CD8-positive, alpha-beta T cell (primary cell): ENCODE measurements at regions of chr1 and their contacts with region 1.

Region 1: DNA sequence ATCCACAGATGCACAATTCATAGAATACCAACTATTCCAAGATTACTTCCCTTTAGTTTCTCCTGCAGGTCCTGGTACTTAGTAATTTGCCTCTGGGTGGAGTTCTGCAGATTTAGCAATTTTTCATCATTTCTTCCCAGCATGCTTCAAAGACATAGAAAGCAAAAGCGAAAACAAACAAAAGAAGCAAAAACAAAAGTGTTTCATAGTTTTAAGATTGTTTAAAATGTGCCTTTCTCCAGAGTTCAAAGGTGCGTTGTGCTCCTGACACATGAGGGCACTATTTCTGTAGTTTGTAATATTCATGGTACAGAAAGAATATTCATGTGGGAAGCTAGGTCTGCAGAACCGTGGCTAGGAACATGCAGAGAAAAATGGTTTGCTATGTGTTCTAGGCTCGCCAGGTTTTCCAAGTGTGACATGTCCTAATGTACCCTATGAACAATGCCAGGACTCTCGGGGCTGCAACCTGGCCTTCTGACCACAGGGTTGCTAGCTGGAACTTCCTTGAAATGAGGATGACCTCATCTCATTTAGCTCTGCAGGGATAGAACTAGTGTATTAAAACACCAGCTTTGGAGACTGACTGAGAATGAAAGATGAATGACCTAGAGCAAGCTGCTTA is 30.0 kb upstream of the RCSD1 start:
- DNase-seq: peak in 6 of 9 experiments; percentile 32 to 81 (median 58)
- ATAC-seq: peak; percentile 88
- H3K4me3 ChIP-seq: no peak overlapping the region
- H3K4me3 Mint-ChIP-seq: peak overlapping the region; percentile 38
- H3K27ac ChIP-seq: no peak overlapping the region
- H3K27ac Mint-ChIP-seq: no peak overlapping the region
- H3K4me1 ChIP-seq: peaks cover 38% of the 10 kb centered on the region
- H3K4me1 Mint-ChIP-seq: peaks cover 42% of the 10 kb centered on the region
- H3K27me3 ChIP-seq: no peaks in the 10 kb centered on the region
- H3K27me3 Mint-ChIP-seq: no peaks in the 10 kb centered on the region
- CTCF ChIP-seq: peak; percentile 71

Region 2: GRCh38 chr1:167617153-167618147 is 17.4 kb after region 1 on chr1:
- CTCF ChIA-PET with region 1: interaction called, 31 read pairs
- POLR2A ChIA-PET with region 1: no interaction called
- intact Hi-C with region 1: loop called in 1 of 2 experiments (anchors 2 kb)
- DNase-seq: peak in 4 of 9 experiments; percentile 31 to 68 (median 46)
- ATAC-seq: peak; percentile 49
- H3K4me3 ChIP-seq: peak overlapping the region in 1 of 2 experiments; percentile 6
- H3K4me3 Mint-ChIP-seq: peak overlapping the region; percentile 60
- H3K27ac ChIP-seq: peak overlapping the region; percentile 9 to 59
- H3K27ac Mint-ChIP-seq: peak overlapping the region; percentile 92
- H3K4me1 ChIP-seq: peaks cover 39% of the 10 kb centered on the region
- H3K4me1 Mint-ChIP-seq: peaks cover 59% of the 10 kb centered on the region
- H3K27me3 ChIP-seq: no peaks in the 10 kb centered on the region
- H3K27me3 Mint-ChIP-seq: no peaks in the 10 kb centered on the region
- CTCF ChIP-seq: no peak

Region 3: DNA sequence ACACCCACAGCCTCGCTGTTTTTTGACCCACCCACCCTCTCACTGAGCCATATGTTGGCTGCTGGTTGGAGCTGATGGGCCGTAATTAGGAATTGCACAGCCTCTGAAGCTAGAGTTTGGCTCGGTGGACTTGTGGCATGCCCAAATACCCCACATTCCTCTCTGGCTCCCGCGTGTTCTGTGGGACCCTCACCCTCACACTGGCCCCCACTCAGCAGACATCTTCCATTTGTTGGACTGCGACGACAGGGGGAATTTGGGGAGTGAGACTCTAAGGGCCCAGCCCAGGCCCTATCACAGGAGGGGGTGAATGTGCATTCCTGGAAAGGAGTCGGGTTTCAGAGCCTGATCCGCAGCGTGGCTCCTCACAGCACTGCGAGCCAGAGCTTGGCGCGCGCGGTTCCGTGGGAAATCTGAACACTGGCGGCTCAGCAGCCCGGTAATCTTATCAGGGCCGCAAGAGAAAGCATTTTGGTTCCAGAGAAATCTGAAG is 35.1 kb after region 1 on chr1:
- CTCF ChIA-PET with region 1: interaction called, 154 read pairs
- POLR2A ChIA-PET with region 1: interaction called, 68 read pairs
- intact Hi-C with region 1: loop called (anchors 1 kb)
- DNase-seq: peak in 1 of 9 experiments; percentile 46
- ATAC-seq: no peak
- H3K4me3 ChIP-seq: no peak overlapping the region
- H3K4me3 Mint-ChIP-seq: peak overlapping the region; percentile 8
- H3K27ac ChIP-seq: peak overlapping the region in 1 of 2 experiments; percentile 5
- H3K27ac Mint-ChIP-seq: peak overlapping the region; percentile 97
- H3K4me1 ChIP-seq: peaks cover 76% of the 10 kb centered on the region
- H3K4me1 Mint-ChIP-seq: peaks cover 88% of the 10 kb centered on the region
- H3K27me3 ChIP-seq: no peaks in the 10 kb centered on the region
- H3K27me3 Mint-ChIP-seq: no peaks in the 10 kb centered on the region
- CTCF ChIP-seq: no peak

Region 4: GRCh38 chr1:167650269-167651160 is 50.4 kb after region 1 on chr1:
- CTCF ChIA-PET with region 1: interaction called, 11 read pairs
- POLR2A ChIA-PET with region 1: no interaction called
- intact Hi-C with region 1: no loop called
- DNase-seq: peak in 1 of 9 experiments; percentile 38
- ATAC-seq: no peak
- H3K4me3 ChIP-seq: peak overlapping the region in 1 of 2 experiments; percentile 18
- H3K4me3 Mint-ChIP-seq: peak overlapping the region; percentile 72
- H3K27ac ChIP-seq: peak overlapping the region in 1 of 2 experiments; percentile 76
- H3K27ac Mint-ChIP-seq: peak overlapping the region; percentile 91
- H3K4me1 ChIP-seq: peaks cover 81% of the 10 kb centered on the region
- H3K4me1 Mint-ChIP-seq: peaks cover 90% of the 10 kb centered on the region
- H3K27me3 ChIP-seq: no peaks in the 10 kb centered on the region
- H3K27me3 Mint-ChIP-seq: no peaks in the 10 kb centered on the region
- CTCF ChIP-seq: no peak

Region 5: DNA sequence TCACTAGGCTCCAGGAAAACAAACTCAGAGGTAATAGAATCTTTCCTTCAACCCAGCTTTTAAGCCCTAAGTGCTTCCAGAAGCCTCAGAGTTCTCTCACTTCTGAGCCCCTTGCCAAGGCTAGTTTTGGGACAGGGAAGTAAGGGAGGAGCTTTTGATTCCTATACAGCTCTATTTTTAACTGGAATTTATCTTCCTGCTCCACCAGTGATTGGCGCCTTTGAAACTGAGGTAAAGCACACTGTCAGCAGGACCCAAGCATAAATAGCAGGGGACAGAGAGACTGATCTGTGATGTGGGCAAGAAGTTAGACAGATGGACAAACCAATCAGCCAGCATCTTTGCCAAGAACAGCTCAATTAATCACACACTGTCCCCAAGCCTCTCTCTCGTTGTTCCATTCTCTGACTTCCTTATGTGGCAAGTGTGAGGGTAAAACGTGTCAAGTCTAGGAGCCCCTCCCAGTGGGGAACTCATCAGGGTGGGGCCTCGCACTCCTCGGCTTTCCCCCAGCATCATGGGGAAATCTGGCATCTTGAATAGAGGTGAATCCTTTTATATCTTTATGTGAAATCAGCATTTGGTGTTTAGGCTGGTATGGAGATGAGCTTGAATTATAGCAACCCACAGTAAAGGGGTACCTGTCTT is 81.5 kb after region 1 on chr1:
- CTCF ChIA-PET with region 1: interaction called, 186 read pairs
- POLR2A ChIA-PET with region 1: interaction called, 22 read pairs
- intact Hi-C with region 1: no loop called
- DNase-seq: peak in 2 of 9 experiments; percentile 20 to 25
- ATAC-seq: no peak
- H3K4me3 ChIP-seq: no peak overlapping the region
- H3K4me3 Mint-ChIP-seq: no peak overlapping the region
- H3K27ac ChIP-seq: peak overlapping the region; percentile 19 to 48
- H3K27ac Mint-ChIP-seq: no peak overlapping the region
- H3K4me1 ChIP-seq: peaks cover 32% of the 10 kb centered on the region
- H3K4me1 Mint-ChIP-seq: peaks cover 23% of the 10 kb centered on the region
- H3K27me3 ChIP-seq: no peaks in the 10 kb centered on the region
- H3K27me3 Mint-ChIP-seq: no peaks in the 10 kb centered on the region
- CTCF ChIP-seq: no peak

Region 6: DNA sequence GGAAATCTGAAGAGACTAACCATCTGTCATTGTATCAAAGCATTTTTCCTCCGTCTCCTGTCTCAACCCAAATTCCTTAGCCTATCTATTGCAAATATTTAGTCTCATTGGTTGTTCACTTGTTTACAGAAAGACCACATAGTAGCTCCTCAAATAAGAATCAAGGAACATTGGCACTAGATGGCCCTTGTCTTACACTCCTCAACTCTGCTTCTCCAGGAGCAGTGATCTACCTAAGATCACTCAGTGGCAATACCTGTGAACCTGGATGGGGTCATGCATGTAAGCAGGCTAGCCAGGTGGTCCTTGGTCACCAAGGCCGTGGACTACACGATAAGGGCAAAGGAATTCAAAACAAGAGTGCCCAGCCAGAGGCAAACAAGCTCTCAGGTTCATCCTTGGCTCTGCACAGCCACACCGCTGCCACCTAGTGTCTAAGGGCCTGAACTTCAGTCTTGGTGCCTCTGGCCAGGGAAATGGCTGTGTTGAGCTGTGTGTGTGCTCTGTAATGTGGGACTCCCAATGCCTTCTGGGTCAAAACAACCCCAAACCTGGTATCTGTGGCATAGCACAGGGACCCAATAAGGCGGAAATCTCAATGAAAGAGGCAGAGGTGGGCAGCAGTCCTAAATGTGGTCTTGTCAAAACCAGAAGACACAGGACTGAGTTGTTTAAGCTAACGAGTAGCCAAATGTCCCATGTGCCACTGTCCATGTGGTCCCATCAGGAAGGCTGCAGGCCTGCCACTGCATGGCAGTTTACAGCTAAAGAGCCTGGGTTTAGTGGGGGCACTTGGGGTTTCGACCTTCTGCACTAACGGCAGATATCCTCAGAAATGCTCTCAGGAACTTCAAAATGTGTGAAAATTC is 482.2 kb after region 1 on chr1:
- CTCF ChIA-PET with region 1: no interaction called
- POLR2A ChIA-PET with region 1: no interaction called
- intact Hi-C with region 1: loop called in 1 of 2 experiments (anchors 2 kb)
- DNase-seq: peak; percentile 28 to 74 (median 60)
- ATAC-seq: peak; percentile 95
- H3K4me3 ChIP-seq: no peak overlapping the region
- H3K4me3 Mint-ChIP-seq: no peak overlapping the region
- H3K27ac ChIP-seq: no peak overlapping the region
- H3K27ac Mint-ChIP-seq: no peak overlapping the region
- H3K4me1 ChIP-seq: no peaks in the 10 kb centered on the region
- H3K4me1 Mint-ChIP-seq: peaks cover 5% of the 10 kb centered on the region
- H3K27me3 ChIP-seq: no peaks in the 10 kb centered on the region
- H3K27me3 Mint-ChIP-seq: no peaks in the 10 kb centered on the region
- CTCF ChIP-seq: peak; percentile 83